Activated CD4-positive, alpha-beta T cell treated with anti-CD3 and anti-CD28 coated beads, Interleukin-2, amount 10 ng/mL, durations not matched to agents 24 days and 14 days (primary cell): ENCODE measurements at regions of chr11 and their contacts with region 1.

Region 1: DNA sequence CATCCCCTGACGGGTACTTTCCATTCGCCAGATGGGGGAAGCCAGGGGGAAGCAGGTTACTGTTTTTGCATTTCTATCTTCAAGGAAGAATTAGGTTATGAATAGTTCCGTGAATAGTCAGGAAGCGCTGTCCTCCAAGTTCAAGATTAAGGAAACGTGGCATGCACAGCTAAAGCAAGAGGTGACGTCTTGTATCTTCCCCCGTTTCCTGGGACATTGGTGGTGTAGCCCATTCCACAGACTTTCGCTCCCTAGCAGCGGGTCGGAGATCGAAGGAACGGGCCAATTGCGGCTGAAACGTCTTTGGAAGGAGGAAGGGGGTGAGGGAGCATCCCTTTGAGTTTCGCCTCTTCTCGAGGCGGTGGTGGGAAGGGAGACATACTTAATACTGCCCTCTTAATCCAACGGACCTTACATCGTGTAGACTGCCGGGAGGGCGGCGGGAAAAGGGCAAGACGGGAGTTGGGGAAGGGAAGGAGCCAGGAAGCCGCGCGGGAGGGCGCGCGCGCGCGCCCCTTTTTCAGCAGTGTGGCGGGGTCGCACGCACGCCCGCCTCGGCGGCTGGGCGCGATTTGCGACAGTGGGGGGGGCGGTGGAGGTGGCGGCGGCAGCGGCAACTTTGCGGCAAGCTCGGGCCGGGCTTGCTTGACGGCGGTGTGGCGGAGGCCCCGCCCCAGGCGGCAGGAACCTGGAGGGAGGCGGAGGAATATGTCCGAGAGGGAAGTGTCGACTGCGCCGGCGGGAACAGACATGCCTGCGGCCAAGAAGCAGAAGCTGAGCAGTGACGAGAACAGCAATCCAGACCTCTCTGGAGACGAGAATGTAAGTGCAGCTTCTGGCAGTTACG is at the start of gene EED:
- DNase-seq: peak; percentile 98
- H3K4me3 Mint-ChIP-seq: no peak within 1 kb of the TSS
- H3K27ac Mint-ChIP-seq: no peak within 1 kb of the TSS
- H3K4me1 Mint-ChIP-seq: peaks cover 34% of the 10 kb centered on the region
- H3K27me3 Mint-ChIP-seq: no peaks in the 10 kb centered on the region
- total RNA-seq, gene EED: 269 TPM in 2 replicates

Region 2: DNA sequence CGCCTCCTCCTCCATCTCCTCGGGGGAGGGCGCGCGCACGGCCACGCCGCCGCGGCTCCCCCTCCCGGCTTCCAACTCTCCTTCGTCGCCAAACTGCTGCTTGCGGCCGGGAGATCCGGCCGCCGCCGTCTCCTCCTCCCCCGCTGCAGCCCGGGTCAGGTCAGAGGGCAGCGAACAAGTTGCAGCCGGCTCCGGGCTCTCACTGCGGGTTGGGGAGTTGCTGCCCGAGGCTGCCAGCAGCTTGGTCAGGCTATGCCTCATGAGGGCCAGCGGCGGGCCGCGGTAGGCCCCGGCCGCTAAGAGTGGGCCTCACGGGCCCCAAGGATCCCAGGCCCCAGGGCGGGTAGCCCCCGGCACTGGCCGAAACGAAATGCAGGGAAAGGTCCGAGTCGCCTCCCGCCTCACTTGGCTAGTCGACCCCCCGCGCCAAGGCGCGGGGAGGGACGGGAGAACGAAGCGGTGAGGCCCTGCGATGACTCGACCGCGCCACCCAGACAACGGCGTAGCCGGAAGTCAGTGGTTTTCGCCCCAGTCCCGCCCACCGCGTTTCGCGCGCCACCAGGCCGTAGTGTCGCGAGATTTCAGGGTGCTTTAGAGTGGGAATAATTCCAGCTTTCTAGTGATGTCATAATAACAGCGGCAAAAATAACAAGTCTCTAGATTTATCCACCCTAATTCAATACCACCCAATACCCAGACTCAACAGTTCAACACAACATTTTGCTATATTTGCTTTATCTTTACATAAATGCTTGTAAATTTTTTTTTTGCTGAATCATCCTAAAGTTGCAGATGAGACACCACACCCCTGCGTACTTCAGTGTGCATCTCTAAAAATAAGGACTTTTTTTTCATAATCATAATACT is 579.9 kb before region 1 on chr11 and contains the start of gene CREBZF:
- intact Hi-C with region 1: loop called (anchors 2 kb)
- DNase-seq: peak; percentile 98
- H3K4me3 Mint-ChIP-seq: peak within 1 kb of the TSS; percentile 97
- H3K27ac Mint-ChIP-seq: peak within 1 kb of the TSS; percentile 99
- H3K4me1 Mint-ChIP-seq: peaks cover 29% of the 10 kb centered on the region
- H3K27me3 Mint-ChIP-seq: peaks cover 2% of the 10 kb centered on the region
- total RNA-seq, gene CREBZF: 50.9 and 54.5 TPM in 2 replicates

Region 3: DNA sequence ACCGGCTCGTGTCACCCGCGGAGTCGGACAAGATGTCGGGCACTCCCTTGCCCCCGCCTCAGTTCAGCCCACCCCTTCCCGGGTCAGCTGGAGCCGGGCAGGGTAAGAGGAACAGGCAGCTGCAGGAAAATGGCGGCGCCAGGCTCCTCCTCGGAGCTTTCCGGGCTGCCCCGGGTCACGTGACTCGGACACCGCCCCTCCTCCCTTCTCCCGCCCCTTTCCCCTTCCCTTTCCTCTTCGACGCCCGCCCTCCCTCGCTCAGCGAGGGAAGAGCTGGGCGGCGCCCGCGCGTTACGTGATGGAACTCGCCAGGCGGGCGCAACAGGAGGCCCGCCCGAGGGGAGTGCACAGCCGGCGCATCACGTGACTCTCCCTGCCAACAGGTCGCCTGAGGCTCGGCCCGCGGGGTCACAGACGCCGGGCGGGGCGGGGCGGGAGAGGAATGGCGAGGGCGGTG is 175.8 kb before region 1 on chr11 and contains the start of gene PICALM:
- intact Hi-C with region 1: loop called (anchors 1 kb)
- DNase-seq: peak; percentile 99
- H3K4me3 Mint-ChIP-seq: peak within 1 kb of the TSS; percentile 100
- H3K27ac Mint-ChIP-seq: peak within 1 kb of the TSS; percentile 97
- H3K4me1 Mint-ChIP-seq: peaks cover 33% of the 10 kb centered on the region
- H3K27me3 Mint-ChIP-seq: no peaks in the 10 kb centered on the region
- total RNA-seq, gene PICALM: 141 and 156 TPM in 2 replicates

Region 4: DNA sequence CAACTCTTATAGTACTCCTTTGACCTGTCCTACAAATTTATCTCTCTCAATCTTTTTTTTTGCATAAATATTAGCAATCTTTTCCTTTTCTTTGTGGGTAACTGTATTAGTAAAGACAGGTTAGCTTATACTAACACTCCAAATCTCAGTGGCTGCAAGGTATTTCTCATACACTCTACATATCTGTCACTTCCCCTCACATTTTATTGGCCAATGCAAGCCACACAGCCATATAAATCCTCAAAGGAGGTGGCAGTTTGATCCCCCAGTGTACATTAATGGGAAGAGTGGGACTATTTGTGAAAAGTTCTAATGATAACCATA is 42.8 kb before region 1 on chr11:
- intact Hi-C with region 1: loop called (anchors 1 kb)
- DNase-seq: peak; percentile 70
- H3K4me3 Mint-ChIP-seq: no peak overlapping the region
- H3K27ac Mint-ChIP-seq: no peak overlapping the region
- H3K4me1 Mint-ChIP-seq: peaks cover 14% of the 10 kb centered on the region
- H3K27me3 Mint-ChIP-seq: no peaks in the 10 kb centered on the region

Region 5: DNA sequence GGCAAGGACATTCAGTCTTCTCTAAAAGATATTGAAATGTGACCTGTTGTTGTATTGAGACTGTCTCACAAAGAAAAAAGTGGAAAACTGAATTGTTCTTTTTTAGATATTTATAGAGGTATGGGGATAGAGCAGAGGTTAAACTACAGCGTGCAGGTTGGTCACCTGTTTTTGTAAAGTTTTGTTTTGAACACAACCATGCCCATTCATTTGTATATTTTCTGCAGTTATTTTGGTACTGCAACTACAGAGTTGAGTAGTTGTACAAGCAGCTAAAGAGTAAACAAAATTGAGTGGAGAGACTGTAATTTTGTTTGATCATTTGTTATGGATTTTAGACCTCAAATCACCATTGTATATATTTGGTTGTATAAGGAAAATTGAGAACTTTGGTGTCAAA is 11.2 kb after region 1 on chr11:
- intact Hi-C with region 1: loop called (anchors 1 kb)
- DNase-seq: no peak
- H3K4me3 Mint-ChIP-seq: peak overlapping the region; percentile 11
- H3K27ac Mint-ChIP-seq: peak overlapping the region; percentile 66
- H3K4me1 Mint-ChIP-seq: peaks cover 30% of the 10 kb centered on the region
- H3K27me3 Mint-ChIP-seq: no peaks in the 10 kb centered on the region

Region 6: DNA sequence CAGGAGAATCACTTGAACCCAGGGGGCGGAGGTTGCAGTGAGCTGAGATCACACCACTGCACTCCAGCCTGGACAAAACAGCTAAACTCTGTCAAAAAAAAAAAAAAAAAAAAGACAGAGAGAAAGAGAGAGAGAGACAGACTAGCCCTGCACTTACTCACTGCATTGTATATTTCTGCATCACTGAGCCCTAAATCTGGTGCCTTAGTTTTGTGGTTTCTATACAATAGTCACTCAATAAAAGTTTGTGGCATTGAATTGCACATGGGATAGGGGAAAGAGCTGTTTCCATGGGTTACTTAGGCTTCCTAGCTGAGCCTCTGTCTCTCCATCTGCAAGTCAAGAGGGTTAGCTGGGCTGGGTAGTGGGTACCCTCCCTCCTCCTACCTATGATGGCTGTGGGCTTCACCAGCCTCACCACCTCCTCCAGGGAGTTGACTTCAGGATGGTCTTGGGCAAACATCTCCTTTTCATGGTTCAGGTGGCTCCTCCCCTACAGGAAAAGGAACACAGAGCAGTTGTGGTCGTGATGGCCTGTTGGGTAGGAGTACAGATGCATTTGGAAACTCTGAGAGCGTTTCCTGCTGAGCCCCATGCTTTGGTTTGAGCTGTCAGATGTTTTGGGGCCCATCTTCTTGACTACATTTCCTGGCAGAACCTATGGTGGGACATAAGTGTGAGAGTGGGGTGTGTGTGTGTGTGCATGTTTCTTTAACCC is 203.2 kb after region 1 on chr11:
- intact Hi-C with region 1: loop called (anchors 5 kb)
- DNase-seq: peak; percentile 79
- H3K4me3 Mint-ChIP-seq: peak overlapping the region; percentile 48
- H3K27ac Mint-ChIP-seq: no peak overlapping the region
- H3K4me1 Mint-ChIP-seq: peaks cover 37% of the 10 kb centered on the region
- H3K27me3 Mint-ChIP-seq: no peaks in the 10 kb centered on the region